HepG2 (cell line): ENCODE measurements at regions of chr1 and their contacts with region 1.

Region 1: DNA sequence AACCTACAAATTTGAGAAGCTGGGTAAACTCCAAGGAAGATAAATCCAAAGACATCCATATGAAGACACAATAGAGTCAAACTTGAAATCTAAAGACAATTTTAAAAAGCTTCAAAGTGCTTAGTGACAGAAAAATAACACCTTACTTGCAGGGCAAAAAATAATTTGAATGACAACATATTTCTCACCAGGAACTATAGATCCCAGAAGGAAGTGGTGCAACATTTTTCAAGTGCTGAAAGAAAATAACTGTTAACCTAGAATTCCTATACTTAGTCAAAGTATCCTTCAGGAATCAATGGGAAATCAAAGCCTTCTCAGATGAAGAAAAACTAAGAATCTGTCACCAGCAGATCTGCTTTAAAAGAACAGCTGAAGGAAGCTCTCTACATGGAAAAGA is 184.4 kb downstream of the HLX start:
- DNase-seq: no peak
- ATAC-seq: no peak
- H3K4me3 ChIP-seq: no peak overlapping the region
- H3K27ac ChIP-seq: no peak overlapping the region
- H3K4me1 ChIP-seq: no peaks in the 10 kb centered on the region
- H3K27me3 ChIP-seq: no peaks in the 10 kb centered on the region
- CTCF ChIP-seq: no peak
- EP300 ChIP-seq: no peak
- POLR2A ChIP-seq: no peak
- RAD21 ChIP-seq: no peak

Region 2: DNA sequence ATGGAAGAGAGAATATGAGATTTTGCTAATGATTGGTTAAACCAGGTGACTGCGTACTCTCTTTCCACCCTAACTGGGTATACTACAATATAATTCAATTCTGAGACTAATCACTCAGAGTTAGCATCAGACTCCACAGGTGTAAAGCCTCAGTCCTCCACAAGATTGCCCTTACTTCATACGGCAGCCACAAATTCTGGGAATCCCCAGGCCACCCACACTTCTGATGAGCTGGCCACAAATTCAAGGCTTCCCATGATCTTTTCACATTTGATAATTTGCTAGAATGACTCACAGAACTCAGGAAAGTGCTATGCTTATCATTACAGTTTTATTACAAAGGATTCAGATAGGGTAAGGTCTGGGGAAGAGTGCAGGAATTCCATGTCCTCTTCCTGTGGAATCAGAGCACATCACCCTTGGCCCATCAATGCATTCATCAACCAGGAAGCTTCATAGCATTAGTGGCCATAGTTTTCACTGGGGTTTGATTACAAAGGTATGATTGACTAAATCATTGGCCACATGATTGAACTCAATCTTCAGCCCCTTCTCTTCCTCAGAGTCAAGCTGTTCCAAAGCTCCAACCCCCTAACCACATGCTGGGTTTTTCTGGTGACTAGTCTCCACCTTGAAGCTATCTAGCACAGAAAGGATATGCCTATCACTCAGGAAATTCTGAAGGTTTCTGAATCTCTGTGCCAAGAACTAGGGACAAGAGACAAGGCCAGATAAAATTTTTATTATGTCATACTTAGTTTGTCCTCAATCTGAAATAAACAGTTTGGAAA is 1352.5 kb after region 1 on chr1:
- CTCF ChIA-PET with region 1: no interaction called
- POLR2A ChIA-PET with region 1: no interaction called
- in situ Hi-C with region 1: no loop called
- intact Hi-C with region 1: loop called (anchors 5 kb)
- DNase-seq: no peak
- ATAC-seq: no peak
- H3K4me3 ChIP-seq: no peak overlapping the region
- H3K27ac ChIP-seq: no peak overlapping the region
- H3K4me1 ChIP-seq: no peaks in the 10 kb centered on the region
- H3K27me3 ChIP-seq: no peaks in the 10 kb centered on the region
- CTCF ChIP-seq: no peak
- EP300 ChIP-seq: no peak
- POLR2A ChIP-seq: no peak
- RAD21 ChIP-seq: no peak